Colonic mucosa (tissue), 4 donors: ENCODE measurements at regions of chr4 and their contacts with region 1.

Region 1: DNA sequence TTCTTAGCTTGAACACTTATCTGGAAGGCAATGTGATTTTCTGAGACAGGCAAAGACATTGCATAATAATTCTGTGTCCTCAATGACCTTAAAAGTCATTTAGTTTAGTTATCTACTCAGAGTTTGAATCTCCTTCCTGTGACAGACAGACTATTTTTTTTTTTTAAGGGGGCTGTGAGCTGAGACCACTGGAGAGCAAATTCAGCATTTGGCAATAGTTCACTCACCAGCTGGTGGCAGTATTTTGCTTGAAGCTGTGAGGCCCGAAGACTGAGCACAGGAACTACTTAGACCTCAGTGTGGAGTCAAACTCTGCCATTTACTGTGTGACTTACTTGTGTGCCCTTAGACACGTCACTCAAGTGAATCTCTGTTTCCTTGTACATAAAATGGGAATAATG is 22.9 kb upstream of the CPE start:
- DNase-seq: no peak
- H3K4me3 ChIP-seq: no peak overlapping the region
- H3K27ac ChIP-seq: no peak overlapping the region
- H3K4me1 ChIP-seq: no peaks in the 10 kb centered on the region
- H3K27me3 ChIP-seq: no peaks in the 10 kb centered on the region
- CTCF ChIP-seq: peak; percentile 33

Region 2: GRCh38 chr4:165150545-165150944 is 205.4 kb before region 1 on chr4:
- intact Hi-C with region 1: no loop called
- DNase-seq: no peak
- H3K4me3 ChIP-seq: no peak overlapping the region
- H3K27ac ChIP-seq: no peak overlapping the region
- H3K4me1 ChIP-seq: no peaks in the 10 kb centered on the region
- H3K27me3 ChIP-seq: no peaks in the 10 kb centered on the region
- CTCF ChIP-seq: no peak

Region 3: DNA sequence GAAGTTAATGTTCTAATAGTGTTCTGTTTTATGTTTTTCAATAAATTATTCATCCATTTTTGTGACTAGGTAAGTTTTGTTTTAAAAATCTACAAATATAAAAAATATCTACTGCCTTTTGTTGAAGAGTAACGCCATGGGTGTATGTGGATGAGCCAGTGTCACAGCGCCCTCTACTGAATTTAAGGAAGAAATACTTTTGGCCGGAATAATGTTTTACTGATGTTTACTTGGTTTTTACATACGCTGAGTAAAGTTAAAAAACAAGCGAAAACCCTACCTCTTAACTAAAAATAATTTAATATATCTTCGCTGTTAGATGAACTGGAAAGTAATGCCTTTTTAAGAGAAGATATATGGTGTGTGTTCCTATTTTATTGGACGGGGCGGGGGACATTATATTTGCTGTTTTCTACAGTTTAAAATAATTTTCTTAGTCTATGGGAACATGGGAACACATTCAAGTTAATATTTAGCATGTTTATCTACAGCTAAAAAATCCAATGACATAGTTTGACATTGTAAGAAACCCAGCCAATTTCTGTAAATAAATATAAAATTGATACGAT is 109.0 kb after region 1 on chr4:
- intact Hi-C with region 1: loop called (anchors 2 kb)
- DNase-seq: no peak
- H3K4me3 ChIP-seq: no peak overlapping the region
- H3K27ac ChIP-seq: no peak overlapping the region
- H3K4me1 ChIP-seq: no peaks in the 10 kb centered on the region
- H3K27me3 ChIP-seq: peaks cover 4% of the 10 kb centered on the region
- CTCF ChIP-seq: peak; percentile 72